MCF 10A (cell line): ENCODE measurements at regions of chr13 and their contacts with region 1.

Region 1: DNA sequence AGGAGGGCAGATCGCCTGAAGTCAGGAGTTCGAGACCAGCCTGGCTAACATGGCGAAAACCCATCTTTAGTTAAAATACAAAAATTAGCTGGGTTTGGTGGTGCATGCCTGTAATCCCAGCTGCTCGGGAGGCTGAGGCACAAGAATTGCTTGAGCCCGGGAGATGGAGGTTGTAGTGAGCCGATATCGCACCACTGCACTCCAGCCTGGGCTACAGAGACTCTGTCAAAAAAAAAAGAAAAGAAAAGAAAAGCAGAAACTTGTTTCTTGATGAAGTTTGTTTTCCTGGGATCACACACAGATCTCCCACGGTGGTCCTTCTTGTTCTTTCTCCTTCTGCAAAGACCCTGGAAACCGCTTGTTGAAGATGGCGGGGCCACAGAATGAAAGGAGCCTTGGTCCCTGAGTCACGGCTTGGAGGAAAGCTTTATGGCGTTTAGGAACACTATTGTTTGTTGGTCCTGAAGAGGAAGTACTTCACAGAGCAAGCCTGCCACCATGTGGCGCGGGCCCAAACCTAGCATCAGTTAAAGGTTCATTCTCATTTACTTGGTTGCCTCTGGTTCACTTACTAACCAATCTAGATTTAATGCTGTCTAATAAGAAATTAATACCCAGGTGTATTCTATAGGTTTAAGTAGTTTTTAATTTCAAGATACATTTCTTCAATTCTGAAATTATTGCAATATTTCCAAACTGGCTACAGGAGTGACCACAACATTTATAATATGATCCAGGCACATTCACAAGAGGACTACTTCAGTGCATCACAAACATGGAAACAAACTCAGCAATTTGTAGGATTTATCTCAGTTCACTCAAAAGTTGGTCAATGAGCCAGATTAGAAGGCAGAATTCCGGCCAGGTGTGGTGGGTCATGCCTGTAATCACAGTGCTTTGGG is 21.3 kb upstream of the ARL11 start:
- DNase-seq: peak; percentile 87
- H3K4me3 Mint-ChIP-seq: peak overlapping the region; percentile 55
- H3K27ac Mint-ChIP-seq: no peak overlapping the region
- H3K4me1 Mint-ChIP-seq: no peaks in the 10 kb centered on the region
- H3K27me3 Mint-ChIP-seq: no peaks in the 10 kb centered on the region
- CTCF ChIP-seq: peak; percentile 74

Region 2: GRCh38 chr13:49240017-49240416 is 367.0 kb before region 1 on chr13:
- CTCF ChIA-PET with region 1: interaction called, 3 read pairs
- POLR2A ChIA-PET with region 1: no interaction called
- intact Hi-C with region 1: loop called (anchors 1 kb)
- DNase-seq: peak; percentile 57
- H3K4me3 Mint-ChIP-seq: no peak overlapping the region
- H3K27ac Mint-ChIP-seq: no peak overlapping the region
- H3K4me1 Mint-ChIP-seq: no peaks in the 10 kb centered on the region
- H3K27me3 Mint-ChIP-seq: no peaks in the 10 kb centered on the region
- CTCF ChIP-seq: peak; percentile 38

Region 3: GRCh38 chr13:49300739-49301589 is 306.0 kb before region 1 on chr13:
- CTCF ChIA-PET with region 1: interaction called, 35 read pairs
- POLR2A ChIA-PET with region 1: interaction called, 4 read pairs
- intact Hi-C with region 1: loop called (anchors 1 kb)
- DNase-seq: peak; percentile 78
- H3K4me3 Mint-ChIP-seq: peak overlapping the region; percentile 54
- H3K27ac Mint-ChIP-seq: peak overlapping the region; percentile 30
- H3K4me1 Mint-ChIP-seq: peaks cover 23% of the 10 kb centered on the region
- H3K27me3 Mint-ChIP-seq: no peaks in the 10 kb centered on the region
- CTCF ChIP-seq: peak; percentile 74

Region 4: DNA sequence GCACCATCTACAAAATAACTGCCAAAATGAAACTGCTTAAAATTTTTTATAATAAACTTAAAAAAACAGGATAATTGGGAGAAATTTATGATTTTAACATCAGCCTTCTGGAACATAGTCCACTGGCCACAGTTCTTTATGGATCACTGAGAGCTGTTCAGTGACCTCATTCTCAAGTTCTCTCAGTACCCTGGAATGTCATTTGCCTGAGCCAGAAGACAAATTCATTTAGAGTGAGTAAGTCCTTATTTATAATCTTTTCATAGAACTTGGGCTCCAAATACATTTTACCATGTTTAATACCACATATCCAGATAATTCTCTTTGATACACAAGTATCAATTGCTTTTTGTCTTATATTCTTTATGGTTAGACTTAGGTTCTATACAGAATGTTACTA is 250.8 kb before region 1 on chr13:
- CTCF ChIA-PET with region 1: no interaction called
- POLR2A ChIA-PET with region 1: no interaction called
- intact Hi-C with region 1: no loop called
- DNase-seq: no peak
- H3K4me3 Mint-ChIP-seq: no peak overlapping the region
- H3K27ac Mint-ChIP-seq: no peak overlapping the region
- H3K4me1 Mint-ChIP-seq: peaks cover 7% of the 10 kb centered on the region
- H3K27me3 Mint-ChIP-seq: no peaks in the 10 kb centered on the region
- CTCF ChIP-seq: no peak

Region 5: GRCh38 chr13:49549289-49549688 is 57.7 kb before region 1 on chr13:
- CTCF ChIA-PET with region 1: interaction called, 4 read pairs
- POLR2A ChIA-PET with region 1: no interaction called
- intact Hi-C with region 1: loop called (anchors 5 kb)
- DNase-seq: peak; percentile 8
- H3K4me3 Mint-ChIP-seq: no peak overlapping the region
- H3K27ac Mint-ChIP-seq: no peak overlapping the region
- H3K4me1 Mint-ChIP-seq: no peaks in the 10 kb centered on the region
- H3K27me3 Mint-ChIP-seq: no peaks in the 10 kb centered on the region
- CTCF ChIP-seq: no peak